PC-9 (cell line): ENCODE measurements at regions of chr14 and their contacts with region 1.

Region 1: GRCh38 chr14:51638071-51638944 is 13.4 kb upstream of the FRMD6 start:
- DNase-seq: peak in 1 of 2 experiments; percentile 74
- H3K4me3 ChIP-seq: no peak overlapping the region
- H3K27ac ChIP-seq: no peak overlapping the region
- H3K4me1 ChIP-seq: peaks cover 15% of the 10 kb centered on the region
- H3K27me3 ChIP-seq: no peaks in the 10 kb centered on the region
- CTCF ChIP-seq: no peak

Region 2: GRCh38 chr14:51547260-51547659 is 91.0 kb before region 1 on chr14:
- CTCF ChIA-PET with region 1: no interaction called
- POLR2A ChIA-PET with region 1: no interaction called
- intact Hi-C with region 1: loop called (anchors 5 kb)
- DNase-seq: peak; percentile 57 to 93
- H3K4me3 ChIP-seq: no peak overlapping the region
- H3K27ac ChIP-seq: peak overlapping the region; percentile 84
- H3K4me1 ChIP-seq: peaks cover 34% of the 10 kb centered on the region
- H3K27me3 ChIP-seq: no peaks in the 10 kb centered on the region
- CTCF ChIP-seq: no peak